Activated T-helper 1 cell treated with anti-CD3 and anti-CD28 coated beads, Interleukin-12 subunit alpha, Interleukin-12 subunit beta, Interleukin-2, Interleukin-4 antibody, amounts not matched to agents 30 ng/mL and 10 ng/mL and 1 ng/mL, durations not matched to agents 14 hours and 24 hours and 36 hours (primary cell): ENCODE measurements at regions of chr1 and their contacts with region 1.

Region 1: DNA sequence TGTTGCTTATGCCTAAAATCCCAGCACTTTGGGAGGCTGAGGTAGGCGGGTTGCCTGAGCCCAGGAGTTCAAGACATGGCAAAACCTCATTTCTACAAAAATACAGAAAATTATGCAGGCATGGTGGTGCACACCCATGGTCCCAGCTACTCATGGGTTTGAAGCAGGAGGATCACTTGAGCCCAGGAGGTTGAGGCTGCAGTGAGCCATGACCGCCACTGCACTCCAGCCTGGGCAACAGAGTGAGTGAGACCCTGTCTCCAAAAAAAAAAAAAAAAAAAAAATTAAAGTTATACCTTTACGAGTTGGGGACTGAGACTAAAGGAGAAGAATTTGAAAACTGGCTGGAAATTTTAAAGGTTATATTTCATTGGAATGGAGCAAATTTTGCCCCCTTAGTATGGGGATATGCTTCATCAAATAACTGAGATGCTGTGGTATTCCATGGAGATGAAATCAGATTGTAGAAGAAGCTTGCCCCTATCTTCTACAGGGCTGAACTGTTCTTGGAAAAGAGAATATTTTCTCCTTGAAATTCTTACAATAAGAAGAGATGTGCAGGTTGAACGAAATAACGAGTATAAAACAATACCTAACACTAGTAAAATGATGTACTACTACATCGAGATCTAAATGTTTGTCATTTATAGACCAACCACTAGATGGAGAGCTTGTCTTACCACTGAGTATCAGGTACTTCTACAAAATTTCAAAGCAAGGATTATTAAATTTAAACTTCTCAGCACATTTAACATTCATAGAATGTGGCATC is 34.9 kb upstream of the SCYL3 start:
- DNase-seq: no peak
- H3K4me3 Mint-ChIP-seq: no peak overlapping the region
- H3K27ac Mint-ChIP-seq: no peak overlapping the region
- H3K4me1 Mint-ChIP-seq: peaks cover 6% of the 10 kb centered on the region
- H3K27me3 Mint-ChIP-seq: no peaks in the 10 kb centered on the region

Region 2: GRCh38 chr1:170074250-170075157 is 145.9 kb after region 1 on chr1 and contains the start of gene KIFAP3:
- intact Hi-C with region 1: loop called (anchors 2 kb)
- DNase-seq: peak; percentile 95
- H3K4me3 Mint-ChIP-seq: peak within 1 kb of the TSS; percentile 95
- H3K27ac Mint-ChIP-seq: peak within 1 kb of the TSS; percentile 96
- H3K4me1 Mint-ChIP-seq: peaks cover 45% of the 10 kb centered on the region
- H3K27me3 Mint-ChIP-seq: no peaks in the 10 kb centered on the region
- total RNA-seq, gene KIFAP3: 12.9 and 13.5 TPM in 2 replicates

Region 3: GRCh38 chr1:170531758-170532657 is 603.4 kb after region 1 on chr1 and contains the start of gene GORAB:
- intact Hi-C with region 1: loop called (anchors 10 kb)
- DNase-seq: peak; percentile 82
- H3K4me3 Mint-ChIP-seq: no peak within 1 kb of the TSS
- H3K27ac Mint-ChIP-seq: no peak within 1 kb of the TSS
- H3K4me1 Mint-ChIP-seq: peaks cover 8% of the 10 kb centered on the region
- H3K27me3 Mint-ChIP-seq: peaks cover 4% of the 10 kb centered on the region
- total RNA-seq, gene GORAB: 11.8 and 12.2 TPM in 2 replicates

Region 4: DNA sequence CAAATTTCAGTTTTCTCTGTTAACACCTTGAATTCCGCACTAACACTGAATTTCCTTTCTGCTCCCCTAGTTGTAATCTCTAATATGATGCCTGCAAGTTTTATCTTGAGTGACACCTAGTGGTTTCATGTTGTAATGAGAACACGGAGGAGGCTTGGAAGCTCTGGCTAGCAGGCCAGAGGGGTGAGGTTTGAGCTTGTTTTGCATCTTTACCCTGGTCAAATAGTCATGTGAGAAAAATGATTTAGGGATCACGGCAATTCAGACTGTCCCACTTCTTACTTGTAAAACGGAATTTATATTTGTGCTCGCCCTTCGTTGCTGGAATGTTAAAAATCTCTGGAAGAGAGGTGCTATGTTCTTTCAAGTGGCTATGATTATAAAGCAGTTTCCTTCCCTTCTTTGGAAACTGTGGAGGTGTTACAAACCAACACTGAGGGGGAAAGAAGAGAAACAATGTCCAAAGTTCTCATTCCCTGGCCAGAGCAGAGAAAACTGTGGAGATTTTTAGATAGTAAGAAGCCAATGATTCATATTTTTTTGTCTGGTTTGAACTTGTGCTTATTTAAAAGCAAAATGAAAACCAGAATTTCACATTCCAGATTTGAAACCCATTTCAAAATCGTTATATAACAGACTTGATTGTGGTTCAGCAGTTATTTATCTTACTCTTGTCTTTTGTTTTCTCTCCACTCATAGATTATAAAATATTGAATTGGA is 1001.4 kb after region 1 on chr1:
- intact Hi-C with region 1: loop called (anchors 1 kb)
- DNase-seq: peak; percentile 8
- H3K4me3 Mint-ChIP-seq: no peak overlapping the region
- H3K27ac Mint-ChIP-seq: no peak overlapping the region
- H3K4me1 Mint-ChIP-seq: no peaks in the 10 kb centered on the region
- H3K27me3 Mint-ChIP-seq: peaks cover 4% of the 10 kb centered on the region

Region 5: DNA sequence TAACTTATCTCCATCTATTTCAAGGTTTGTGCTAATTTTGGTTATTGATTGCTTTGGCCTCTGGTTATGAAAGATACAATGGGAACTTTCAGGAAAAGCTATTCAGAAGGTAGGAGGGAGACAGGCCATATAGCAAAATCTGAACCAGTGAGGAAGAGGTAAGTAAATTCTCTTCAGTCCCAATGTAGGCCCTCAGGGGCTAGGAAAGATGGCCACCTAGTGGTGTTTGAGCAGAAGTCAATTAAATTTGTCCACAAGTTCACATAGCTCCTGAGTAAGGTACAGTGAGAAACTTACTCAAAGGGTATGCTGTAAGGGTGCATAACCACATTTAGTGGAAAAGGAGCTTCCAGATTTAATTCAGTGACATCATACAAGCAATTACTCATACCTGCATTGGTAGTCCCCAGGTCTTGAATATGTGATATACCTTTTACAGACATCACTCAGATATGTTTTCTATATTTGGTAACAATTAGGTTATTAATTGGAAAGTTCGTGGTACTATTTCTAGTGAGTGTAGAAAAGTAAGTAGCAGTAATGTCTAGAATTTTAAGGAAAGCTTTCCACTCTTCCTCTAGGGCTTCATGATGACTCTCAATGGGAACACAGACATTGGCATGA is 1298.2 kb after region 1 on chr1:
- intact Hi-C with region 1: loop called (anchors 2 kb)
- DNase-seq: no peak
- H3K4me3 Mint-ChIP-seq: no peak overlapping the region
- H3K27ac Mint-ChIP-seq: no peak overlapping the region
- H3K4me1 Mint-ChIP-seq: no peaks in the 10 kb centered on the region
- H3K27me3 Mint-ChIP-seq: peaks cover 5% of the 10 kb centered on the region